ENCODE measurements at regions of chr4 and their contacts with region 1.

Region 1: GRCh38 chr4:128191115-128191781 is 96.4 kb downstream of the PGRMC2 start:
- DNase-seq: peak; percentile 17
- H3K4me3 ChIP-seq: no peak overlapping the region
- CTCF ChIP-seq: peak; percentile 66

Region 2: GRCh38 chr4:128204901-128205300 is 13.7 kb after region 1 on chr4:
- CTCF ChIA-PET with region 1: interaction called, 12 read pairs
- POLR2A ChIA-PET with region 1: no interaction called
- DNase-seq: no peak
- H3K4me3 ChIP-seq: no peak overlapping the region
- CTCF ChIP-seq: no peak

Region 3: GRCh38 chr4:128379860-128380259 is 188.6 kb after region 1 on chr4:
- CTCF ChIA-PET with region 1: interaction called, 15 read pairs
- POLR2A ChIA-PET with region 1: no interaction called
- DNase-seq: no peak
- H3K4me3 ChIP-seq: no peak overlapping the region
- CTCF ChIP-seq: peak; percentile 67